ENCODE measurements at regions of chr6 and their contacts with region 1.

Region 1: DNA sequence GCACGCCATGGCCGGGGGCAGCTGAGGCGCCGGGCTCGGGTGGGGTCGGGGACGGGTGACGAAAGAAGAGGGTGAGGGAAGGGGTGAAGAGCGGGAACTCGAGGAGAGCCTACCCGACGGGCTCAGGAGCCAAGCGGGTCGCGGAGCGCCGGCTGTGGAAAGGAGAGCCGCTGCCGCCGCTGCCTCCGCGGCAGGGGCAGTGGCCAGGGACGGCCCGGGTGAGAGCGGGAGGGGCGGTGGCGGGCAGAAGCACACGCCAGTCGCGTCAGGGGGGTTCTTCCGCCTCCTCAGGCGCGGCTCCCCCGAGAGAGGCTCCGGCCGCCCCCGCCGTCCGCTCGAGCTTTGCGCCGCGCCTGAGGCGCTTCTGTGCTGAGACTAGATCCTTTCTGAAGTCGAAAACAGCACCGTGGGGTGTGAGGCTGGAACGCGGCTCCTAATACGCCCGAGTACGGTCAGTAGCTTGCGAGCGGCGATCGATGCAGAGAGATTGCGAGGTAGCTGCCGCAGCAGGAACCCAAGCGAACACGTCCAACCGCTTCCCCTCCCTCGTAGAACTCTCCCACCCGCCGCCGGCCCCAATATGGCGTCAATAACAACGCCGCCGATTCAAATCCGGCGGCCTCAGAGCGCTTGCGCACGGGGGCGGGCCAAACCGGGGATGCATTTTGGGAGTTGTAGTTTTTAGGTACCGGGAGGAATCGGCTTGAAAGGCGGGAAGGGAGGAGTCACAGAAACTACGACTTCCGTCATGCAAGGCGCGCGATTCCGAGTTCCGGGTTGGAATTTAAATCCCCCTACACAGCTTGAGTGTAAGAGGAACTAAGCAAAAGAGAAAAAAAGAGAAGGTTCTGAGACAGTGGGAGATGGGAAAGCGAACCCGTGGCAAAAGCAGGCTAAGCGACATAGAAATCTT is at the start of gene AKIRIN2:
- DNase-seq: peak; percentile 96 to 99 (median 98)
- ATAC-seq: peak; percentile 90
- H3K4me3 ChIP-seq: peak within 1 kb of the TSS; percentile 80
- H3K4me3 Mint-ChIP-seq: peak within 1 kb of the TSS; percentile 92 to 98 (median 96)
- H3K27ac ChIP-seq: peak within 1 kb of the TSS; percentile 93
- H3K27ac Mint-ChIP-seq: peak within 1 kb of the TSS; percentile 89 to 97 (median 94)
- H3K4me1 ChIP-seq: peaks cover 6 to 13% of the 10 kb centered on the region in 2 donors
- H3K4me1 Mint-ChIP-seq: peaks cover 22 to 43% (median 40%) of the 10 kb centered on the region in 7 donors
- H3K27me3 ChIP-seq: no peaks in the 10 kb centered on the region
- H3K27me3 Mint-ChIP-seq: no peaks in the 10 kb centered on the region
- total RNA-seq, gene AKIRIN2: 36.0 to 197 (median 57.4) TPM

Region 2: DNA sequence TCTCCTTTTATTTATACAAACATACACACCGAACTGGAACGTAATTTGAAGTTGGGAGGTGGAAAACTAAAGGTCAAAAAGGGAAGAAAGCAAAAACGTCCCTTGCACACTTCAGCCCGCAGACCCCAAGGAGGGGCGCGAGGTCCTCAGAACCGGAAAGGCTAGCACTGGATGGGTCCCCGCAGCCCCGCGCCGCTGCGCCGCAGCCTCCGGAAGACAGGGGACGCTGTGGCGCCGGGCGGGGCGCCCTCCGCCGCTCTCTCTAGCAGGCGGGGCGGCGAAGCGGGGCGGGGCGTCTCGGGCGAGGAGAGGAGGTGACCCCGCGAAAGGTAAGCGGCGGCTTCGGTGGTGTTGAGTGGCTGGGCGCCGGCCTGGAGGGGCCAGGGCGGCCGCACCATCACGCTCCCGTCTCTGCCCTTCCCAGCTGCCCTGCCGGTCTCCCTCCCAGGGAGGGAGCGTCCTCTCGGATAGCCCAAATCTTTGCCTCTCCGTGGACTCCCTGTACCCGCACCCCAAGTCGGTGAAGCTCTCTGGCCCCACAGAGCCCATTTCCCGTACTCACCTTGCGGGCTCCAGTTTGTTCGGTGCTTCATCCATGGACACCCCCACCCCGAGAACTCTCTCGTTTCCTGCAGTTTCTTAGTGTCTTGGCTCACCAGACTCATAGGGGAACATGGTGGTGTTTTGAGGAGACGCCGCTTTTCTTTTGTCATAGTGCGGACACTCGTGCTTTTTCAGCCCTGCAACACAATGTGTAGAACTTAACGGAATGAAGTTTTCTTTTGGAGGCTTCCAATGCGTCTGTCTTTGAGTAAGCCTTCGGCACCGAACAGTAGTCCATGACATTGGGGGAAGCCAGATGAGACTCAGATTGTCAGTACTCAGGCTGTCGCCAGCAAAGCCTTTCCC is 379.4 kb before region 1 on chr6 and contains the start of gene SMIM8:
- CTCF ChIA-PET with region 1: no interaction called
- POLR2A ChIA-PET with region 1: no interaction called
- intact Hi-C with region 1: loop called in 1 of 2 experiments (anchors 1 kb)
- DNase-seq: peak; percentile 67 to 94 (median 81)
- ATAC-seq: peak; percentile 100
- H3K4me3 ChIP-seq: peak within 1 kb of the TSS; percentile 82
- H3K4me3 Mint-ChIP-seq: peak within 1 kb of the TSS; percentile 94 to 99 (median 98)
- H3K27ac ChIP-seq: peak within 1 kb of the TSS; percentile 80
- H3K27ac Mint-ChIP-seq: peak within 1 kb of the TSS; percentile 77 to 95 (median 93)
- H3K4me1 ChIP-seq: no peaks in the 10 kb centered on the region
- H3K4me1 Mint-ChIP-seq: peaks cover 14 to 32% (median 26%) of the 10 kb centered on the region in 7 donors
- H3K27me3 ChIP-seq: no peaks in the 10 kb centered on the region
- H3K27me3 Mint-ChIP-seq: peaks cover 0 to 6% (median 5%) of the 10 kb centered on the region in 5 donors
- total RNA-seq, gene SMIM8: 7.3 to 15.7 (median 10.5) TPM

Region 3: DNA sequence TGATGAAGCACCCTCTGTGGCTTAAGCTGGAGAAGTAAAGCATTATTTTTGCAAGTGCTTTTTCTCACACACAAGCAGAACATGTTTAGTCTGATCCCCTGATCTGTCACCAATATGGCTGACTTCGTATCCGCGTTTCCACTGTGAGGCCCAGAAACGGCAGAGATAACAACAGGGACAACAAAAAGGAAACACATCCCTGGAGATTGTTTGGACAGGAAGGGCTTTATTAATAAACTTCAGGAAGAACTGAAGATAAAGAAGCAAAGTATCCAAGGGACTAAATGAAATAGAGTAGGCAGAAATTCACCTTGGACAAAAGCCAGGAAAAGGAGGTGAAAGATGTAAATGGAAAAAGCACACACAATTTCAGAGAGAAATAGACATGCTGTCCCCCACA is 161.4 kb before region 1 on chr6:
- CTCF ChIA-PET with region 1: no interaction called
- POLR2A ChIA-PET with region 1: no interaction called
- intact Hi-C with region 1: no loop called
- DNase-seq: no peak
- ATAC-seq: no peak
- H3K4me3 ChIP-seq: no peak overlapping the region
- H3K4me3 Mint-ChIP-seq: no peak overlapping the region
- H3K27ac ChIP-seq: no peak overlapping the region
- H3K27ac Mint-ChIP-seq: no peak overlapping the region
- H3K4me1 ChIP-seq: no peaks in the 10 kb centered on the region
- H3K4me1 Mint-ChIP-seq: peaks cover 0 to 7% (median 4%) of the 10 kb centered on the region in 7 donors
- H3K27me3 ChIP-seq: no peaks in the 10 kb centered on the region
- H3K27me3 Mint-ChIP-seq: no peaks in the 10 kb centered on the region

Region 4: GRCh38 chr6:87589693-87590549 is 112.0 kb before region 1 on chr6 and contains the starts of genes ORC3 and RARS2:
- CTCF ChIA-PET with region 1: interaction called, 3 read pairs
- POLR2A ChIA-PET with region 1: interaction called, 44 read pairs
- intact Hi-C with region 1: loop called (anchors 1 kb)
- DNase-seq: peak; percentile 86 to 97 (median 92)
- ATAC-seq: peak; percentile 100
- H3K4me3 ChIP-seq: peak within 1 kb of the TSS; percentile 89
- H3K4me3 Mint-ChIP-seq: peak within 1 kb of the TSS; percentile 87 to 100 (median 96)
- H3K27ac ChIP-seq: peak within 1 kb of the TSS; percentile 92
- H3K27ac Mint-ChIP-seq: peak within 1 kb of the TSS; percentile 87 to 97 (median 95)
- H3K4me1 ChIP-seq: peaks cover 22 to 32% of the 10 kb centered on the region in 2 donors
- H3K4me1 Mint-ChIP-seq: peaks cover 49 to 81% (median 75%) of the 10 kb centered on the region in 7 donors
- H3K27me3 ChIP-seq: no peaks in the 10 kb centered on the region
- H3K27me3 Mint-ChIP-seq: no peaks in the 10 kb centered on the region
- total RNA-seq, gene ORC3: 17.7 to 29.8 (median 27.6) TPM
- total RNA-seq, gene RARS2: 21.0 to 40.0 (median 24.2) TPM

Region 5: DNA sequence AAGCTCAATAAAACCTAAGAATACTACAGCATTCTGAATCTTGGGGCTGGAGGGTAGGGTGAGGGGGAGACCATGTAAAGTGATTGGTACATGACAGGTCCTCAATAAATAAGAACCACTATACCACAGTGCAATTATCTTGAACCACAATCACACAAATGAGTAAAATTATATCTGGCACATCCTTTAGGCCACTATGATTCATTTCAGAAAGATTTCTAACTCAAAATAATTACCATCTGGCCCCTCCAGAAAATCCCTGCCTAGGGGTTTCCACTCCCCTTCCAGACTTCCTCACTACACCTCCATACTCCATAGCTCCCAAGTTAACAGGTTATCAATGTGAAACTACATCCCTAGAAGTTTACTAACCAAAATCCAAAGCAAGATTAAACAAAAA is 19.6 kb before region 1 on chr6:
- CTCF ChIA-PET with region 1: no interaction called
- POLR2A ChIA-PET with region 1: interaction called, 6 read pairs
- intact Hi-C with region 1: loop called in 1 of 2 experiments (anchors 2 kb)
- DNase-seq: no peak
- ATAC-seq: no peak
- H3K4me3 ChIP-seq: no peak overlapping the region
- H3K4me3 Mint-ChIP-seq: peak overlapping the region in 1 of 10 donors; percentile 46
- H3K27ac ChIP-seq: peak overlapping the region; percentile 14
- H3K27ac Mint-ChIP-seq: peak overlapping the region in 7 of 9 donors; percentile 2 to 91 (median 62)
- H3K4me1 ChIP-seq: peaks cover 0 to 17% of the 10 kb centered on the region in 2 donors
- H3K4me1 Mint-ChIP-seq: peaks cover 23 to 72% (median 55%) of the 10 kb centered on the region in 7 donors
- H3K27me3 ChIP-seq: no peaks in the 10 kb centered on the region
- H3K27me3 Mint-ChIP-seq: no peaks in the 10 kb centered on the region

Region 6: DNA sequence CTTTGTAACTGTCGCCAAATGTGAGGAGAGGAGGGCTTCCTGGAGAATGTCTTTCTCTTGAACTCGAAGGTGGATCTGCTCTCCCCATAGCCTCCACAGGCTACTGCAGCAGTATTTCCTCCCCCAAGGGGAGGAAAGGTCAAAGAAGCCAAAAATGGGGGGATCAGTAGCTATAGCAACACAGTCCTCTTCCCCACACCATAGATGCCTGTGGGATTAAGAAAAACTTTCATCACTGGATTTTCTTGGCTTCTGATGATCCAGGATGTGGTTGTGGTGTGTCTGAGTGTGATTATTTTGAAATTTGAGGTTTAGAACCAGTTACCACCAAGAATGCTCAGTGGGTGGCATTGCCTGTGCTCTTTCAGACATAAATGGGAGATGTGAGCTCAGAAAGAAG is 205.6 kb after region 1 on chr6:
- CTCF ChIA-PET with region 1: no interaction called
- POLR2A ChIA-PET with region 1: no interaction called
- intact Hi-C with region 1: loop called in 1 of 2 experiments (anchors 2 kb)
- DNase-seq: peak in 6 of 9 donors; percentile 7 to 38 (median 16)
- ATAC-seq: peak; percentile 61
- H3K4me3 ChIP-seq: no peak overlapping the region
- H3K4me3 Mint-ChIP-seq: peak overlapping the region in 3 of 10 donors; percentile 6 to 49 (median 10)
- H3K27ac ChIP-seq: no peak overlapping the region
- H3K27ac Mint-ChIP-seq: peak overlapping the region in 1 of 9 donors; percentile 23
- H3K4me1 ChIP-seq: peaks cover 14 to 19% of the 10 kb centered on the region in 2 donors
- H3K4me1 Mint-ChIP-seq: peaks cover 0 to 31% (median 21%) of the 10 kb centered on the region in 7 donors
- H3K27me3 ChIP-seq: no peaks in the 10 kb centered on the region
- H3K27me3 Mint-ChIP-seq: peaks cover 0 to 49% (median 14%) of the 10 kb centered on the region in 5 donors

Region 7: GRCh38 chr6:89360415-89360999 is 1658.6 kb after region 1 on chr6:
- CTCF ChIA-PET with region 1: no interaction called
- POLR2A ChIA-PET with region 1: no interaction called
- intact Hi-C with region 1: loop called in 1 of 2 experiments (anchors 2 kb)
- DNase-seq: no peak
- ATAC-seq: peak; percentile 48
- H3K4me3 ChIP-seq: no peak overlapping the region
- H3K4me3 Mint-ChIP-seq: peak overlapping the region in 2 of 10 donors; percentile 5 to 10
- H3K27ac ChIP-seq: no peak overlapping the region
- H3K27ac Mint-ChIP-seq: peak overlapping the region in 6 of 9 donors; percentile 4 to 35 (median 15)
- H3K4me1 ChIP-seq: peaks cover 12 to 26% of the 10 kb centered on the region in 2 donors
- H3K4me1 Mint-ChIP-seq: peaks cover 22 to 68% (median 56%) of the 10 kb centered on the region in 7 donors
- H3K27me3 ChIP-seq: no peaks in the 10 kb centered on the region
- H3K27me3 Mint-ChIP-seq: no peaks in the 10 kb centered on the region